ENCODE measurements at regions of chr16 and their contacts with region 1.

Region 1: DNA sequence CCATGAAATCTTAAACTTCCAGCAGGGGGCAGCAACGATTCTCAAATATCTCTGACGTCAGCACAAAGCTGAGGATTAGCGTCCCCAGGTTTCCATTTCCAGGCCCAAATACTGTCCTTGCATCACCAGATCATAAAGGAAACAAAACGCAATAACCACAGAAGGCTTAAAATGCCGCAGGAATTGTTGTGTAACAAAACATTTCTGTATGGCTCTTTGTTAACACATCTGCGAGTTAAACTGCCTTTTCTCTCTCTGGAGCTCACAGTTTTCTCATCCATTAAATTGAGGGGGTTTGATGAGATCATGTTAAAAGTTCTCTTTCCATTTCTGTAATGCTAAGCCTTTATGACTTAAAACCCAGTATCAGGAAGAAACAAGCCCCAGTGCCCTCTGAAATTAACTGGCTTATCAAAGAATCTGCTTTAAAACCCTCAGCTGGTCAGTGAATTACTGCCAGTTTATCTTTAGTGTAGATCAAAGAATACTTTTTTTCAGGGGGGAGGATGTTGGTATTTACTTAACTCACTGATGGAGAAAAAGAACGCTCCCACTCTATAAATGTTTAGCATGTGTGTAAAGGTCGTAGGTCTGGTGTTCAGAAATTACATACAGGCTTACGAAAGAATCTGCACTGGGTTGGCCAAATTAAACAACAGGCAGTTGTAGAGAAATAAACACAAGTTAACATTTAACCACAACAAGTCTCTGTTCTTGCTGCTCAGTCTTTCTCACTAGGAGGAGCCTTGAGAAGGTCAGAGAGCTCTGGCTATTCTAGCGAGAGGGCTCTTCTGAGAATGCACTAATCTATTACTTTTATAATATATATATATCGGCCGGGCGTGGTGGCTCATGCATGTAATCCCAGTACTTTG is 10.6 kb upstream of the TERF2 start:
- DNase-seq: no peak
- H3K4me3 ChIP-seq: no peak overlapping the region
- H3K27ac ChIP-seq: peak overlapping the region; percentile 83
- H3K4me1 ChIP-seq: peaks cover 35% of the 10 kb centered on the region
- H3K27me3 ChIP-seq: no peaks in the 10 kb centered on the region
- CTCF ChIP-seq: peak; percentile 75

Region 2: GRCh38 chr16:69286941-69287713 is 109.3 kb before region 1 on chr16:
- intact Hi-C with region 1: no loop called
- DNase-seq: peak; percentile 62
- H3K4me3 ChIP-seq: no peak overlapping the region
- H3K27ac ChIP-seq: peak overlapping the region; percentile 32
- H3K4me1 ChIP-seq: peaks cover 19% of the 10 kb centered on the region
- H3K27me3 ChIP-seq: no peaks in the 10 kb centered on the region
- CTCF ChIP-seq: peak; percentile 77

Region 3: DNA sequence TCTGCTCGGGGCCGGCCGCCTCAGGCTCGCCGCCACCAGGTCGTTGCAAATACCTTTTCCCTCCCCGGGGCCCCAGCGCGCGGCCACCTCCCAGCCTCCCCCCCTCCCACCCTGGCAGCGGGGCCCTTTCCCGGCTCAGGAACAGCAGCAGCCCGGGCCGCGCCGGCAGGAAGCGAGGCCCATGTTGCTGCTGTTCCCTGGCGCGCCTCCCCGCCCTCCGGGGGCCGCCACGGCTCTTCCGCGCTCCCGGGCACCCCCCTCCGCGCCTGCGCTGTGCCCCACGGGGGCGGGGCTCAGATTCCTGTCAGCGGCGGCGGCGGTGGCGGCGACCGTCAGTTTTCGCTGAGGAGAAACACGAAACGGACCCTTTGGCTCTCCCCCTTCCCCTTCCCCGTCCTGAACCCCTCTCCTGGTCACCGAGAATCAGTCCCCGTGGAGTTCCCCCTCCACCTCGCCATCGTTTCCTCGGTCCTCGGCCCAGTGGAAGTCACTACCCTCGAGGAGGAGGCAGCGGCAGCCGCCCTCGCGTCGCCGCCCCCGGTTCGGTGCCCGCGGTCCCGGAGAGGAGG is 169.3 kb after region 1 on chr16 and contains the start of gene NFAT5:
- intact Hi-C with region 1: loop called (anchors 10 kb)
- DNase-seq: peak; percentile 89
- H3K4me3 ChIP-seq: peak within 1 kb of the TSS; percentile 98
- H3K27ac ChIP-seq: peak within 1 kb of the TSS; percentile 99
- H3K4me1 ChIP-seq: peaks cover 59% of the 10 kb centered on the region
- H3K27me3 ChIP-seq: no peaks in the 10 kb centered on the region
- CTCF ChIP-seq: no peak
- total RNA-seq, gene NFAT5: 13.9 TPM

Region 4: DNA sequence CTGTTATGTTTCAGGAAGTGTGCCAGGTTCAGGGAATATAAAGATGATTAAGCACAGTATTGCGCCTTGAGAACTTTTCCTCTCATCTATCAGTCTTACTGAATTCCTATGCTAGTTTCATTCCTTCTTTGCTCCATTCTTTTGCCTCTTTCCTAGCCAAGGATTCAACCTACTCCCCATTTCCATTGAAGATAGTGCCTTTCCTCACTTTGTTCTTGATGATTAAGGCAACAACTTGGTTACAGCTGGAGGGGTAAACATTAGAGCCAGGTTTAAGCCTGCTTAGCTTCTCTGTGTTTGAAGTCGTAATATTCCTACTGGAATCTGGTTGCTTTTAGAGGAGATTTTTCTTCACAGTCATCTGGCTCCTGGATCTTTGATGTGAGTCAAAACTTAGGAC is 254.8 kb after region 1 on chr16:
- intact Hi-C with region 1: loop called (anchors 10 kb)
- DNase-seq: no peak
- H3K4me3 ChIP-seq: no peak overlapping the region
- H3K27ac ChIP-seq: no peak overlapping the region
- H3K4me1 ChIP-seq: no peaks in the 10 kb centered on the region
- H3K27me3 ChIP-seq: no peaks in the 10 kb centered on the region
- CTCF ChIP-seq: no peak

Region 5: GRCh38 chr16:69688589-69688988 is 292.2 kb after region 1 on chr16:
- intact Hi-C with region 1: no loop called
- DNase-seq: no peak
- H3K4me3 ChIP-seq: no peak overlapping the region
- H3K27ac ChIP-seq: no peak overlapping the region
- H3K4me1 ChIP-seq: no peaks in the 10 kb centered on the region
- H3K27me3 ChIP-seq: no peaks in the 10 kb centered on the region
- CTCF ChIP-seq: no peak

Measured in left ventricle myocardium inferior (tissue), 1 donor.